HepG2 (cell line): ENCODE measurements at regions of chr1 and their contacts with region 1.

Region 1: GRCh38 chr1:112715264-112716053 is at the start of gene PPM1J:
- DNase-seq: peak; percentile 79
- ATAC-seq: peak; percentile 69
- H3K4me3 ChIP-seq: peak within 1 kb of the TSS; percentile 58 to 75 (median 59)
- H3K27ac ChIP-seq: no peak within 1 kb of the TSS
- H3K4me1 ChIP-seq: peaks cover 30% of the 10 kb centered on the region
- H3K27me3 ChIP-seq: peaks cover 11 to 60% of the 10 kb centered on the region in 2 experiments
- CTCF ChIP-seq: no peak
- EP300 ChIP-seq: no peak
- POLR2A ChIP-seq: no peak
- RAD21 ChIP-seq: no peak
- total RNA-seq, gene PPM1J: 0.07 TPM in 1 of 2 replicates, not detected in the other

Region 2: GRCh38 chr1:112660072-112660471 is 55.4 kb before region 1 on chr1:
- CTCF ChIA-PET with region 1: no interaction called
- POLR2A ChIA-PET with region 1: no interaction called
- in situ Hi-C with region 1: no loop called
- intact Hi-C with region 1: no loop called
- DNase-seq: no peak
- ATAC-seq: no peak
- H3K4me3 ChIP-seq: no peak overlapping the region
- H3K27ac ChIP-seq: no peak overlapping the region
- H3K4me1 ChIP-seq: no peaks in the 10 kb centered on the region
- H3K27me3 ChIP-seq: no peaks in the 10 kb centered on the region; a peak in 1 of 5 replicates
- CTCF ChIP-seq: no peak
- EP300 ChIP-seq: no peak
- POLR2A ChIP-seq: no peak
- RAD21 ChIP-seq: no peak

Region 3: GRCh38 chr1:112674439-112674985 is 40.9 kb before region 1 on chr1 and contains the start of gene MOV10:
- CTCF ChIA-PET with region 1: no interaction called
- POLR2A ChIA-PET with region 1: interaction called, 11 read pairs
- in situ Hi-C with region 1: no loop called
- intact Hi-C with region 1: no loop called
- DNase-seq: peak; percentile 67
- ATAC-seq: peak; percentile 87
- H3K4me3 ChIP-seq: peak within 1 kb of the TSS; percentile 82 to 91 (median 83)
- H3K27ac ChIP-seq: peak within 1 kb of the TSS; percentile 90
- H3K4me1 ChIP-seq: peaks cover 49% of the 10 kb centered on the region
- H3K27me3 ChIP-seq: no peaks in the 10 kb centered on the region; a peak in 1 of 5 replicates
- CTCF ChIP-seq: peak; percentile 35
- EP300 ChIP-seq: 0 out of 4 replicates have a peak, but pooled peaks of 1 of the 2 experiments have one; percentile 16
- POLR2A ChIP-seq: peak in 1 of 2 experiments; percentile 75; a peak in 3 of 4 replicates
- RAD21 ChIP-seq: no peak
- total RNA-seq, gene MOV10: 38.0 and 56.4 TPM in 2 replicates

Region 4: DNA sequence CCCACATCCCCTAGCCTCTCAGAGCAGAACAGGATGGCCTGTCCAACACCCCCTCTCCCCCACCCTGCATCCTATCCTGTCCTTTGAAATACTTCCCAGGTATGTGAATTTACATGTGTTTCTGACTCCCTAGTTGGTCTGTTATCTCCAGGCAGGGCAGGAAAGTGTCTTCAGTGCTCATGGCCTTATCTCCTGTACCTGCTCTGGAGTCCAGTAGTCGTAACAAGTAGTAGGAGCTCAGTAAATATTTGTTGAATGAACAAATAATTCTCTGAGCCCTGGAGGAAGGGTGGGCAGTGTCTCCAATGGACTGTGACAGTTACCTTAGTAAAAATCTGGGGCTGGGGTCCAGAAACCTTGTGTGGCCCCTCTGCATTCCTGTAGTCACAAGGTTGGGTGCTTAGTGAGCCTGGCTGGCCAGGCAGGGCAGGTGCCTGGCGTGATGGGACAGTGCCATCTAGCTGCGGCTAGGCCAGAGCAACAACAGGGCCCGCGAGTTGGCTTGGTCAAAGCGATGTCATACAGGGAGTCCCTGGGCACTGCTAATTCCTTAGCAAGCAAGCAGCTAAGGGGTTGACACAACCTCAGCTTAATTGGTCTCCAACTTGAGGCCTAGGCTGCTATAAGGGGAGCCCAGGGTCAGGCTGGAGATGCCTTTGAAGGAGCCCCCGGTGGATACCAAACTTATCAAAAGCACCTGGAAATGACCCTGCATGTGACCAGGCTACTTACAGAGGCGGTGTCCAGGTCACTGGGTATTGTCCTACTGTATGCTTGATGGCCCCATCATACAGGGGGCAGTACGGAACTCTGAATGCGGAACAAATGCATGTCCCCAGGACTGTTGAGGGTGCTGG is 88.7 kb after region 1 on chr1:
- CTCF ChIA-PET with region 1: interaction called, 37 read pairs
- POLR2A ChIA-PET with region 1: no interaction called
- in situ Hi-C with region 1: loop called (anchors 5 kb)
- intact Hi-C with region 1: loop called (anchors 1 kb)
- DNase-seq: peak; percentile 48
- ATAC-seq: peak; percentile 96
- H3K4me3 ChIP-seq: no peak overlapping the region
- H3K27ac ChIP-seq: no peak overlapping the region
- H3K4me1 ChIP-seq: peaks cover 41% of the 10 kb centered on the region
- H3K27me3 ChIP-seq: peaks cover 0 to 3% of the 10 kb centered on the region in 2 experiments; a peak in 1 of 5 replicates
- CTCF ChIP-seq: peak; percentile 97
- EP300 ChIP-seq: no peak
- POLR2A ChIP-seq: no peak
- RAD21 ChIP-seq: peak; percentile 93

Region 5: GRCh38 chr1:112882271-112882744 is 166.8 kb after region 1 on chr1:
- CTCF ChIA-PET with region 1: interaction called, 3 read pairs
- POLR2A ChIA-PET with region 1: interaction called, 3 read pairs
- in situ Hi-C with region 1: no loop called
- intact Hi-C with region 1: loop called (anchors 2 kb)
- DNase-seq: no peak
- ATAC-seq: peak; percentile 57
- H3K4me3 ChIP-seq: peak overlapping the region; percentile 11 to 48 (median 42); a peak in 5 of 6 replicates
- H3K27ac ChIP-seq: no peak overlapping the region
- H3K4me1 ChIP-seq: peaks cover 26% of the 10 kb centered on the region
- H3K27me3 ChIP-seq: peaks cover 5 to 15% of the 10 kb centered on the region in 2 experiments; a peak in 3 of 5 replicates
- CTCF ChIP-seq: no peak
- EP300 ChIP-seq: no peak
- POLR2A ChIP-seq: no peak
- RAD21 ChIP-seq: no peak

Region 6: DNA sequence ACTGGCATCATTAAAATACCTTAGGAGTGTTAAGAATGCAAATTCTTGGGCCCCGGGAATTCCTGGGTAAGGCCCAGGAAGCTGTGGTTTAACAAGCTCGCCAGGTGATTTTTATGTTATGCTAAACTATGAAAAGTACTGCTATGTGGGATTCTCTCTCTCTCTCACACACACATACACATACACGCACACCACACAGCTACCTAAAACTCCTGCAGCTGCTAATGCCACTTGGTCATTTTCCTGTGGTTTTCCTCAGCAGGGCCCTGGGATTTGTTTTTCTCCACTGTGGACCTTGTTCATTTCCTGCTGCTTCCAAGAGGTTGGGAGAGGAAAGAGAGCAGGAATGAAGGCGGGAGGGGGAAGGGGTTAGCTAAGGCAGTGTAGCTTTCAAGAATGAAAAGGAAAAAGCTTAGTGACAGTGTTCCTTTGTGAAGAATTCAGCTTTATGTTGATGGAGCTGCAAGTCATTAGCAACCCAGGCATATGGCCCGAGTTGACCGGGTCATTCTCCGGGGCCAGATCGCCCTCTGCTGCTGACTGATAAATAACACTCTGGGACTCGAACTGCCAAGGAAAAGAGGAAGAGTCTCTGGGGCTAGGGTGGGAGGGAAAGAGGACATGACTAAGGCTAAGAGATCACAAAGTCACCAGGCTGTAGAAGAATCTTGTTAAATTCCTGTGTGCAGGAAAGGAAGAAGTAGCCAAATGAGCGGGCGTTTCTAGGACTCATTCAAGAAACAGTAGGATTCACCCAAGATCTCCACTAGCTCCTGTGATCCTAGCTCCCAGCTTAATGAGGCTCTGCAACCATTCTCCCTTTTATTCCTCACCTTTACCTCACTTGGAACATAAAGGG is 327.1 kb after region 1 on chr1:
- CTCF ChIA-PET with region 1: interaction called, 4 read pairs
- POLR2A ChIA-PET with region 1: interaction called, 5 read pairs
- in situ Hi-C with region 1: loop called (anchors 25 kb)
- intact Hi-C with region 1: loop called (anchors 5 kb)
- DNase-seq: peak; percentile 68
- ATAC-seq: peak; percentile 93
- H3K4me3 ChIP-seq: peak overlapping the region; percentile 4 to 50 (median 36); a peak in 4 of 6 replicates
- H3K27ac ChIP-seq: peak overlapping the region; percentile 31
- H3K4me1 ChIP-seq: peaks cover 46% of the 10 kb centered on the region
- H3K27me3 ChIP-seq: no peaks in the 10 kb centered on the region
- CTCF ChIP-seq: peak; percentile 89
- EP300 ChIP-seq: no peak
- POLR2A ChIP-seq: no peak
- RAD21 ChIP-seq: peak; percentile 87

Region 7: DNA sequence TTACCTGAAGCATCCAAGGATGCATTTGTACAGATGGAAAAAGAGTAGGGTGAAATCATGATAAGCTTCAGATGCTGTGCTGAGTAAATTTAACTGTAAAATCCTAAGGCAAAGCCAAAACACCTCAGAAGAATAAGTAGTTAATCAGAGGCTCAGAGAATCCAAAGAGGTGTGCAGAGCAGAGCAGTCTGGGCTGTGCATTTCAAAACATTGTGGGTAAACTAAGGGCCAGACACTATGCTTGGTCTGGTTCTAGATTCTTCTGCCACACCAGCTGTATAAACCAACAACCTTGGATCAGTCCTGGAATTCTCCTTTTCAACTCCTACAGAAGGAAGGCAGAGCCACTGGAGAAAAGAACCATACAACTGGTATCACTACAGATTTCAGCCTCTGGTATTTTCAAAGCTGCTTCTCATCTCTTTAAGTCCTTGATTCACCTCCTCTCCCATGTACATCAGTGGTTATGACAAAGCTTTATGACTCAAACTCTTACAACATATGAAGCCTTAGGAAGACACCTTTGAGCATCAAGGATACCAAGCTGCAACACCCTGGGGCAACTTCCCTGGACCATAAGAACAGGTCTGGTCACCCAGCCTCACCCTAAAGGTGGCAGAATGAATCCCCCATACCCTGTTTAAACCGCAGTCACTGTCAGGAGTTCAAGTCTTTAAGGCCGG is 1202.1 kb after region 1 on chr1:
- CTCF ChIA-PET with region 1: no interaction called
- POLR2A ChIA-PET with region 1: no interaction called
- in situ Hi-C with region 1: no loop called
- intact Hi-C with region 1: no loop called
- DNase-seq: no peak
- ATAC-seq: no peak
- H3K4me3 ChIP-seq: no peak overlapping the region
- H3K27ac ChIP-seq: no peak overlapping the region
- H3K4me1 ChIP-seq: no peaks in the 10 kb centered on the region
- H3K27me3 ChIP-seq: peaks cover 0 to 2% of the 10 kb centered on the region in 2 experiments; a peak in 1 of 5 replicates
- CTCF ChIP-seq: no peak
- EP300 ChIP-seq: no peak
- POLR2A ChIP-seq: no peak
- RAD21 ChIP-seq: no peak